Activated B cell treated with CpG ODN at 0.5 μM for 24 hours (primary cell): ENCODE measurements at regions of chr2 and their contacts with region 1.

Region 1: DNA sequence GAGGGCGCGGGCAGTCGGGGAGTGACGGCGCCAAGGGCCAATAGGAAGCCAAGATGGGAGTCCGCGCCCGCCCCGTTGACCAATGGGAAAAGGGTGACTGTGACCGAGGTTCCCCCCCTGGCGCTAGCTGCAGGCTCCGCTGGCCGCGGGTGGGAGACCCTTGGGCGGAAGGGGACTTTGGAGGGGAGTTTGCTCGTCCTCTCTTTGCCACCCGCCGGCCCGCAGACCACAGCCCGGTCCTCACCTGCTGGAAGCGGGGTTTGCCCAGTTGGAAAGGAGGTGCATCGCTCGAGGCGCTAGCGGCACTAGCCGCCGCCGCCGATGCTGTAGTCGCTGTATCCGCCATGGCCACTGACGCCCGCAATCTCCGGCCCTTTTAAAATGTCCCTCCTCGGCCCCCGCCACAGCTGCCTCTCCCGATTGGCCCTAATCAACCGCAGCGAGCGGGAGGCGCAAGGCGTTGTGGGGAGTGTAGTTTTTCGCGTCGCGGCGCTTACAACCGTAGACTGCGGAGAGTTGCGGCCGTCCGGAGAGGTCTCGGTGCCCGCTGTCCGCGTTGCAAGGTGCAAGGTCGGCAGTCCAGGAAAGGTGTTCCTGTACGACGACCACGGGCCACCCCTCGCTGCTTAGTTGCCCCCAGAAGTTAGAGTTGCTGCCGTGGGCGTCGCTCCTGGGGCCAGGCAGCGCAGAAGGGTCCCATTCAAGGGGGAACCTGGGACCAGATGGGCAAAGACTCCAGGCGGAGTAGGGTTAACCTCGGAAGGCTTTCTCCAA is at the start of gene SFXN5:
- DNase-seq: peak; percentile 99
- ATAC-seq: peak; percentile 89
- H3K4me3 Mint-ChIP-seq: peak within 1 kb of the TSS; percentile 90
- H3K27ac Mint-ChIP-seq: peak within 1 kb of the TSS; percentile 94
- H3K4me1 Mint-ChIP-seq: peaks cover 18% of the 10 kb centered on the region
- H3K27me3 Mint-ChIP-seq: no peaks in the 10 kb centered on the region
- CTCF ChIP-seq: no peak
- total RNA-seq, gene SFXN5: 10.2 and 13.9 TPM in 2 replicates

Region 2: GRCh38 chr2:72862239-72862988 is 209.1 kb before region 1 on chr2:
- CTCF ChIA-PET with region 1: no interaction called
- POLR2A ChIA-PET with region 1: no interaction called
- intact Hi-C with region 1: no loop called
- DNase-seq: peak; percentile 77
- ATAC-seq: peak; percentile 89
- H3K4me3 Mint-ChIP-seq: peak overlapping the region; percentile 42
- H3K27ac Mint-ChIP-seq: no peak overlapping the region
- H3K4me1 Mint-ChIP-seq: peaks cover 16% of the 10 kb centered on the region
- H3K27me3 Mint-ChIP-seq: peaks cover 39% of the 10 kb centered on the region
- CTCF ChIP-seq: peak; percentile 87

Region 3: GRCh38 chr2:72887754-72888437 is 183.7 kb before region 1 on chr2:
- CTCF ChIA-PET with region 1: no interaction called
- POLR2A ChIA-PET with region 1: no interaction called
- intact Hi-C with region 1: loop called (anchors 2 kb)
- DNase-seq: peak; percentile 46
- ATAC-seq: peak; percentile 32
- H3K4me3 Mint-ChIP-seq: peak overlapping the region; percentile 79
- H3K27ac Mint-ChIP-seq: no peak overlapping the region
- H3K4me1 Mint-ChIP-seq: peaks cover 13% of the 10 kb centered on the region
- H3K27me3 Mint-ChIP-seq: peaks cover 61% of the 10 kb centered on the region
- CTCF ChIP-seq: peak; percentile 46

Region 4: GRCh38 chr2:72953976-72954375 is 117.6 kb before region 1 on chr2:
- CTCF ChIA-PET with region 1: no interaction called
- POLR2A ChIA-PET with region 1: no interaction called
- intact Hi-C with region 1: no loop called
- DNase-seq: no peak
- ATAC-seq: no peak
- H3K4me3 Mint-ChIP-seq: no peak overlapping the region
- H3K27ac Mint-ChIP-seq: no peak overlapping the region
- H3K4me1 Mint-ChIP-seq: no peaks in the 10 kb centered on the region
- H3K27me3 Mint-ChIP-seq: no peaks in the 10 kb centered on the region
- CTCF ChIP-seq: no peak

Region 5: GRCh38 chr2:72993147-72993932 is 78.2 kb before region 1 on chr2:
- CTCF ChIA-PET with region 1: no interaction called
- POLR2A ChIA-PET with region 1: no interaction called
- intact Hi-C with region 1: loop called (anchors 1 kb)
- DNase-seq: peak; percentile 27
- ATAC-seq: peak; percentile 71
- H3K4me3 Mint-ChIP-seq: no peak overlapping the region
- H3K27ac Mint-ChIP-seq: no peak overlapping the region
- H3K4me1 Mint-ChIP-seq: no peaks in the 10 kb centered on the region
- H3K27me3 Mint-ChIP-seq: no peaks in the 10 kb centered on the region
- CTCF ChIP-seq: peak; percentile 81

Region 6: GRCh38 chr2:73112913-73113633 is 41.5 kb after region 1 on chr2 and contains the start of gene RAB11FIP5:
- CTCF ChIA-PET with region 1: no interaction called
- POLR2A ChIA-PET with region 1: interaction called, 4 read pairs
- intact Hi-C with region 1: loop called (anchors 1 kb)
- DNase-seq: peak; percentile 75
- ATAC-seq: peak; percentile 91
- H3K4me3 Mint-ChIP-seq: peak within 1 kb of the TSS; percentile 77
- H3K27ac Mint-ChIP-seq: peak within 1 kb of the TSS; percentile 59
- H3K4me1 Mint-ChIP-seq: peaks cover 11% of the 10 kb centered on the region
- H3K27me3 Mint-ChIP-seq: no peaks in the 10 kb centered on the region
- CTCF ChIP-seq: no peak
- total RNA-seq, gene RAB11FIP5: 3.2 and 3.5 TPM in 2 replicates

Region 7: DNA sequence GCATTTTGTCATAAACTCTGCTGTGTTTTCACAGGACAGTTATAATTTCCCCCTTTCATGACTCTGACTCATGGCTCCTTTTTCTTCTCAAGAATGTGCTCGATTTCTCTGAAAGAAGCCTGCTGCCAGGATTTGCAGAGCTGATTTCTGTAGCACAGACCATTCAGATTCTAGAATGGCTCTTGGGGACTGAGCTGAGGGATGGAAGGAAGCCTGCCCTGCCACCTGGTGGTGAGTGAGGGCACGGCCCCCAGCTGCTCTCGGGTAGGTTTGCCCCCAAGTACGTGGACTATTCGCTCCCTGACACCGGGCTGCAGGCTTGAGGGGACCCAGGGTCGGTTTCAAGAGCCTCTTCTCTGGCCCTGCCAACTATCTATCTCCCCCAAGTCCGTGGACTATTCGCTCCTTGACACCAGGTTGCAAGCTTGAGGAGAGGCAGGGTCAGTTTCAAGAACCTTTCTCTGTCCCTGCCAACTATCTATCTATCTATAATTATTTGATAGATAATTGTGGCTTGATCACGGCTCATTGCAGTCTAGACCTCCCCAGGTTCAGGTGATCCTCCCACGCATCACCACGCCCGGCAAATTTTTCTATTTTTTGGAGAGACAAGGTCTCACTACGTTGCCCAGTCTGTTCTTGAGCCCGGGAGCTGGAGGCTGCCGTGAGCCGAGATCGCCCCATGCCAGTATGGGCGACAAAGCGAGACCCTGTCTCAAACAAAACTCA is 141.1 kb after region 1 on chr2:
- CTCF ChIA-PET with region 1: no interaction called
- POLR2A ChIA-PET with region 1: interaction called, 4 read pairs
- intact Hi-C with region 1: loop called (anchors 1 kb)
- DNase-seq: peak; percentile 64
- ATAC-seq: peak; percentile 60
- H3K4me3 Mint-ChIP-seq: peak overlapping the region; percentile 49
- H3K27ac Mint-ChIP-seq: no peak overlapping the region
- H3K4me1 Mint-ChIP-seq: peaks cover 32% of the 10 kb centered on the region
- H3K27me3 Mint-ChIP-seq: peaks cover 14% of the 10 kb centered on the region
- CTCF ChIP-seq: no peak

Region 8: DNA sequence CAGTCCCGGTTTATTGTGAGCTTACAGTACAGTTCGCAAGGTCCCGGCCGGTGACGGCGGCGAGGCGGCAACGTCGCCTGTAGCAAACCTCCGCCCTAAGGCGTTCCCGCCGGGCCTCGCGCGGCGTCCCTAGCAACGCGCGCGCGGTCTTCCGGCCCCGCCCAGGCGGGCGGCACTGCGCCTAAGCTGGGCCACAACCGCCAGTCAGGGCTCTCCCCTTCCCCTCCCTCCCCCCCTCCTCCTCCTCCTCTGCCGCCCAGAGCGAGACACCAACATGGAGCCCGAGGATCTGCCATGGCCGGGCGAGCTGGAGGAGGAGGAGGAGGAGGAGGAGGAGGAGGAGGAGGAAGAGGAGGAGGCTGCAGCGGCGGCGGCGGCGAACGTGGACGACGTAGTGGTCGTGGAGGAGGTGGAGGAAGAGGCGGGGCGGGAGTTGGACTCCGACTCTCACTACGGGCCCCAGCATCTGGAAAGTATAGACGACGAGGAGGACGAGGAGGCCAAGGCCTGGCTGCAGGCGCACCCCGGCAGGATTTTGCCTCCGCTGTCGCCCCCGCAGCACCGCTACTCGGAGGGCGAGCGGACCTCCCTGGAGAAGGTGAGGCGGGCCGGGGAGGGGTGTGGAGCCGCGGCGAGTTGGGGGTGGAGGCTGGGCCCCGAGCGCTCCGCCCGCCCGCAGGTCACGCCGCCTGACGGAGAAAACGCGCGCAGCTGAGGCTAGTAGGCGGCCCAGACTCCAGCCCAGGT is 314.2 kb after region 1 on chr2 and contains the start of gene ALMS1:
- CTCF ChIA-PET with region 1: no interaction called
- POLR2A ChIA-PET with region 1: interaction called, 3 read pairs
- intact Hi-C with region 1: loop called (anchors 1 kb)
- DNase-seq: peak; percentile 85
- ATAC-seq: peak; percentile 85
- H3K4me3 Mint-ChIP-seq: peak within 1 kb of the TSS; percentile 90
- H3K27ac Mint-ChIP-seq: peak within 1 kb of the TSS; percentile 89
- H3K4me1 Mint-ChIP-seq: peaks cover 19% of the 10 kb centered on the region
- H3K27me3 Mint-ChIP-seq: peaks cover 3% of the 10 kb centered on the region
- CTCF ChIP-seq: no peak
- total RNA-seq, gene ALMS1: 17.8 and 20.1 TPM in 2 replicates